Activated B cell treated with CpG ODN at 0.5 μM for 24 hours (primary cell): ENCODE measurements at regions of chr3 and their contacts with region 1.

Region 1: DNA sequence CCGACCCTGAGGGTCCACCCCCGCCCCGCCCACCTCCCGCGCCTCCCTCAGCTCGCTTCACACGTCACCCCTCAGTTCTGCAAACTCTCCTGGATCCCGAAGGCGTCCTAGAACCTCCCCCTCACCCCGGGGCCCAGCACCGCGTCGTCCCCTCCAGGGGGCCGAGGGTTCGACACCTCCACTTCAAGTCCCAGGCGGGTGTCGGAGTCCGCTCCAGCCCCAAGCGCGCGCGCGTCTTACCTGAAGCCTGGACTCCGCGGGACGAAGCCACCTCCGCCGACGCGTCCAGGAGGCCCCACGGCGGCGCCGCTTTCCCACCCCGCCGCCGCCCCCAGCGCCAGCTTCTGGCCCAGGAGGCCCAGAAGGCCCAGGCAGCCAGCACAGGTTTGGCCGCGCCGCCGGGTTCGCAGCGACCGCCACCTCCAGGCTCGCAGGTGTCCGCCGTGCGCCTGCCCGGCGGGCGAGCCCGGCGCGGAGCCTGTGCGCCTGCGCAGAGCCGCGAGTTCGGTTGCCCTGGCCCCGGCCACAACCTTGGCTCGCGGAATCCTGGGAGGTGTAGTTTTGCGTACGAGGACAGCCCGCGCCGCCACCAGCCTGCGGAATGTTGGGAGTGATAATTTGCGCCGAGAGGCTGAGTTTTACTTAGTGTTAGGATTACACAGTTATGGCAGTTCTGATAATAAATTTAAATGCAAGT is at the start of gene POMGNT2:
- DNase-seq: peak; percentile 80
- ATAC-seq: peak; percentile 98
- H3K4me3 Mint-ChIP-seq: peak within 1 kb of the TSS; percentile 79
- H3K27ac Mint-ChIP-seq: no peak within 1 kb of the TSS
- H3K4me1 Mint-ChIP-seq: peaks cover 14% of the 10 kb centered on the region
- H3K27me3 Mint-ChIP-seq: no peaks in the 10 kb centered on the region
- CTCF ChIP-seq: no peak
- total RNA-seq, gene POMGNT2: 2.6 and 2.7 TPM in 2 replicates

Region 2: GRCh38 chr3:43621656-43622432 is 516.1 kb after region 1 on chr3 and contains the start of gene ANO10:
- CTCF ChIA-PET with region 1: no interaction called
- POLR2A ChIA-PET with region 1: no interaction called
- intact Hi-C with region 1: loop called (anchors 1 kb)
- DNase-seq: peak; percentile 98
- ATAC-seq: peak; percentile 91
- H3K4me3 Mint-ChIP-seq: peak within 1 kb of the TSS; percentile 88
- H3K27ac Mint-ChIP-seq: peak within 1 kb of the TSS; percentile 77
- H3K4me1 Mint-ChIP-seq: peaks cover 13% of the 10 kb centered on the region
- H3K27me3 Mint-ChIP-seq: peaks cover 1% of the 10 kb centered on the region
- CTCF ChIP-seq: no peak
- total RNA-seq, gene ANO10: 6.4 and 8.1 TPM in 2 replicates

Region 3: GRCh38 chr3:44136421-44136820 is 1030.7 kb after region 1 on chr3:
- CTCF ChIA-PET with region 1: no interaction called
- POLR2A ChIA-PET with region 1: no interaction called
- intact Hi-C with region 1: no loop called
- DNase-seq: no peak
- ATAC-seq: no peak
- H3K4me3 Mint-ChIP-seq: no peak overlapping the region
- H3K27ac Mint-ChIP-seq: no peak overlapping the region
- H3K4me1 Mint-ChIP-seq: no peaks in the 10 kb centered on the region
- H3K27me3 Mint-ChIP-seq: peaks cover 14% of the 10 kb centered on the region
- CTCF ChIP-seq: no peak